ENCODE measurements at regions of chr3 and their contacts with region 1.

Region 1: DNA sequence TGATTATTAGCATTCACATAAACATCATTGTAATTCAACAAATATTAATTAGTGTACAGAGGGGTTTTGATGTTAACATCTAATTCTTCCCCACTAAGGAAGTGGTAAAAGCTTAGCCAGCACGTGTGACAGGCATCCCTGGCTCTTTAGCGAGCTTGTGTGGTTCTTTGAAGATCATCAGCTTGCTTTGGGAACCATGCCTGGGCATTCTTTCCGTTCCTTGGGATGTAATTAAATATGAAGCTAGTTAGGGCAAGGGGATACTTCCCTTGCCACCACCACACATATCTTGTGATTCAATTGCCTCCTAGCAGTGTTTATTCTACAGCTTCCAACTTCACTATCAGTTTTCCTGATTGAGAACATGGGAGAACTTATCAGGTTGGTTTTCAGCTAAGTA is 246.5 kb downstream of the MYRIP start:
- DNase-seq: no peak

Region 2: DNA sequence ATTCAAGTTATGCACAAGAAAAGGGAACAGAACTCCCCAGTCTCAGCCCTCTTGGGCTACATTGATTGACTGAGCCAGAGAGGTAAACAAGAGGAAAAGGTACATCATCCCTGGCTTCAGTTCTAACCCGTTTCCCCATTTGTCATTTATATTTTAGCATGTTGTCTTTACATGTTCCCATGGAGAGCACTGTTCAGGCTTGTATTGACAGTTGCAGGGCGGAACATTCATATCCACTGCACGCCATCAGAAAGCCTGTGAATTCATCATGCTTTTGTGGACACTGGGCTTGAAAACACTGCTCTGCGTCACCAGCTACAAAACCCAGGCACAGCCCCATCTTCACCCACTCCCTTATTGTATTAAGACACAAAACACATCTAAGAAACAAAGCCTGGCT is 12.7 kb after region 1 on chr3:
- CTCF ChIA-PET with region 1: no interaction called
- POLR2A ChIA-PET with region 1: no interaction called
- DNase-seq: no peak

Region 3: DNA sequence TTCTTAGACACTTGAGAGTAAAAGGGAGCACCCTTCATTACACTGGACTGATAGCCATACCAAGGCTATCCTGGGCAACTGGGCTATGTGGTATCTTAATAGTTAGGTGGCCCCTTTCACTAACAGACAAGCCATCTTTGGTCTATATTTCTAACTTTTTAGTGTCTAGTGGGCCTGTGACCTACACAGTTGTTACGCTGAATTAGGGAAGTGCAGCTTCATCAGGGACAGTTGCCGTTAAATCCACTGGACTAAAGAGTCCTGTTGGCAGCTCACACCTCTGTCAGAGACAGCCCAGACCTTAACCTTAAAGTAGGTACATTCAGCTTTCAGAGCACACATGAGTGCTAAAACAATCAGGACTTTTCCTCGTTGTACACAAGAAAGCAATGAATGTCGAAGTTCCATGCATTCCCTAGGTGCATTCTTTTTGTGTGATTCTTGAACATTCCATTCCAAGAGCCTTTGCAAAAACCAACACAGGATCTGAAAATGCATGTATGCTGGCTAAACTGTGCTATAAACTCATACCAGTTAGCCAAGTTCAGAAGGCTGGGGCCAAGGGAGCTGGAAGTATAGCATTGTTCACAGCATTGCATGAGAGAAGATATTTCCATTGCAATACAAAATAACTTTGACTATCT is 23.4 kb after region 1 on chr3:
- CTCF ChIA-PET with region 1: no interaction called
- POLR2A ChIA-PET with region 1: no interaction called
- DNase-seq: no peak

Region 4: DNA sequence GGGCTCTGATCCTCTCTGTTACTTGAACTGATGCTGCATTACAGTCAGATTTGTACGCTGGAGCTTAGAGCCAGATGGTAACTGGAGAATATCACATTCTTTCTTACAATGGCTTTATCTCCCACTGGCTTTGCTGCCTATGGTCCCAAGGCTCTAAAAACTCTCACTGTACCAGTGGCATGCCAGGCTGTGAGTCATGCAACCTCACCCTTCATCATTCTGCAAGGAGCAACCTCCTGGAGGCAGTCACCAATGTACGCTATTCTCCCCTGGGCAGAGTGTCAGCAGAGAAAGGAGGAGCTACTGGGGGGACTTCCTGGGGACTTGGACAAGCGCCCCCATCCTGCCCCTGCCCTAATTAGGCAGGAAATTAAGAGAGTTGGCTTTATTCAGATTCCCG is 155.6 kb after region 1 on chr3:
- CTCF ChIA-PET with region 1: interaction called, 12 read pairs
- POLR2A ChIA-PET with region 1: no interaction called
- DNase-seq: no peak

Measured in HEK293T (cell line).